Activated T-helper 1 cell treated with anti-CD3 and anti-CD28 coated beads, Interleukin-12 subunit alpha, Interleukin-12 subunit beta, Interleukin-2, Interleukin-4 antibody, amounts not matched to agents 30 ng/mL and 10 ng/mL and 1 ng/mL, durations not matched to agents 14 hours and 24 hours and 36 hours (primary cell): ENCODE measurements at regions of chr17 and their contacts with region 1.

Region 1: GRCh38 chr17:36534840-36535668 is at the starts of genes MYO19 and PIGW:
- DNase-seq: peak; percentile 86
- H3K4me3 Mint-ChIP-seq: peak within 1 kb of the TSS; percentile 98
- H3K27ac Mint-ChIP-seq: peak within 1 kb of the TSS; percentile 99
- H3K4me1 Mint-ChIP-seq: peaks cover 39% of the 10 kb centered on the region
- H3K27me3 Mint-ChIP-seq: no peaks in the 10 kb centered on the region
- total RNA-seq, gene MYO19: 159 and 165 TPM in 2 replicates
- total RNA-seq, gene PIGW: 29.4 and 30.8 TPM in 2 replicates

Region 2: DNA sequence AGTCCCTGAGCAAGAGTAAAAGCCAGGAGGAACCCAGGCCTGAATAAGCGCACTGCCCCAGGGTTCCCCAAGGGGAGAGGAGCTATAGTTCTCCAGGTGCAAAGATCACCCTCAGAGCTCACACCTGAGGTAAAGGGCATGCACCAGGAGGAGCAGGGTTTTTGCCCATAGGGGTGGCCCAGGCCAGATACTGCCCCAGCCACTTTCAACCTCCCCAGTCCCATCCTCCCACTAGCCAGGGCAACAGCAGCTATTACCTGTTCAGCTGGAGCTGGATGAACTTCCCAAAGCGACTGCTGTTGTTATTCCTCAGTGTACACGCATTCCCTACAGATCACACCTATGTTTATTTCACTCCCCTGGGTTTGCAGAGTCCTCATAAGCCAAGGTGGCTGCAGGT is 20.2 kb before region 1 on chr17:
- intact Hi-C with region 1: no loop called
- DNase-seq: no peak
- H3K4me3 Mint-ChIP-seq: no peak overlapping the region
- H3K27ac Mint-ChIP-seq: no peak overlapping the region
- H3K4me1 Mint-ChIP-seq: peaks cover 8% of the 10 kb centered on the region
- H3K27me3 Mint-ChIP-seq: no peaks in the 10 kb centered on the region

Region 3: DNA sequence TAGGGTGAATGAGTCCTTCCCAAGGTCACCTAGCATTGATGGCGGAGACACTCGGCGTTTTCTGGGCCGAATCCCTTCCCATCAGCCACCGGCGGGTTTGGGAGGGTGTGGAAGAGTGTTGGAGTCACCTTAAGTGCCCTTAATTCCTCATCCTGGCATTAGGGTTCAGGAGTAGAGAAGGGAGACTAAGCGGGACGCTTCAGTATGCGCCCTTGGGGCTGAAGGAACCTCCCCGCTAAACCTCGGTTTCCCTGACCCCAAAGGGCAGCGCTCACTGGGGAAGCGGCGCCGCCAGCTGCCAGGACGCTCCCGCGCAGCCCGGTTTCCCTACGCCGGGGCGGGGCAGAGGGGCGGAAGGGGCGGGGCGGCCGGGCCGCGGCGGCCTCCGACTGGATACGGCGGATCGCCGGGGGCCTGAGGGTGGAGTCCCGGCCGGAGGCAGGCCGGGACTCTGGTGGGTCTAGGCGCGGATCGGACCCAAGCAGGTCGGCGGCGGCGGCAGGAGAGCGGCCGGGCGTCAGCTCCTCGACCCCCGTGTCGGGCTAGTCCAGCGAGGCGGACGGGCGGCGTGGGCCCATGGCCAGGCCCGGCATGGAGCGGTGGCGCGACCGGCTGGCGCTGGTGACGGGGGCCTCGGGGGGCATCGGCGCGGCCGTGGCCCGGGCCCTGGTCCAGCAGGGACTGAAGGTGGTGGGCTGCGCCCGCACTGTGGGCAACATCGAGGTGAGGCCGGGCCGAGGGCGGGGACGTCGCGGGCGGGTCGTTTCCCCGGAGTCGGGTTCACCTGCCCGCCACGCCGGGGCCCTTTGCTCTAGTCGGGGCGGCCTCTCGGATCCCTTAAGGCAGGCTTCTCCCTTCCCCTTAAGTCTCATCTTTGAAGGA is 56.6 kb after region 1 on chr17 and contains the start of gene DHRS11:
- intact Hi-C with region 1: loop called (anchors 1 kb)
- DNase-seq: peak; percentile 74
- H3K4me3 Mint-ChIP-seq: peak within 1 kb of the TSS; percentile 85
- H3K27ac Mint-ChIP-seq: peak within 1 kb of the TSS; percentile 65
- H3K4me1 Mint-ChIP-seq: peaks cover 28% of the 10 kb centered on the region
- H3K27me3 Mint-ChIP-seq: no peaks in the 10 kb centered on the region
- total RNA-seq, gene DHRS11: 15.9 and 16.4 TPM in 2 replicates

Region 4: DNA sequence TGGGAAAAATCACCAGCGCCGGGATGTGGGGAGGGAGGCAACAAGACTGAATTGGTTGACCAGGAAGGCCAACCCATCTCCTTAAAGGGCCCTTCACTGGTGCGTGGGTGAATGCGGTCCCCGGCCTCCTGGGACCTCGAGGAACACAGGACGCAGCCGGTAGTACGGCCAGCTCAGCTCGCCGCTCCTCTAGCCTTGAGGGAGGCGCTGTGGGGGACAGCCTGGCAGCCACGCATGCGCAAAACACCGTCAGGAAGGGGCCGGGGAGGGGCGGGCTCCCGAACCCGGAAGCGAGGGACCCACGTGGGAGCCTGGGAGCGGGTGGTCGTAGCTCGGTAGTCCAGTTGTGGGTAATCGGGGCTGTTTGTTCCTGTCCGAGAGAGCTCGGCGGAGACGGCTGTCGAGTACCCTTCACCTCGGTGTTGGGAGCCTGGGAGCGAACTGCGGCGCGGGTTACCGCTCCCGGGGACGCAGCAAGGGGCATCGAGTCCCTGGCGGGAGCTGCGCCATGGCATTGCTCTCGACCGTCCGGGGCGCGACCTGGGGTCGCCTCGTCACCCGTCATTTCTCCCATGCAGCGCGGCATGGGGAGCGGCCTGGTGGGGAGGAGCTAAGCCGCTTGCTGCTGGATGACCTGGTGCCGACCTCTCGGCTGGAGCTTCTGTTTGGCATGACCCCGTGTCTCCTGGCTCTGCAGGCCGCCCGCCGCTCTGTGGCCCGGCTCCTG is 66.4 kb after region 1 on chr17 and contains the start of gene MRM1:
- intact Hi-C with region 1: loop called (anchors 1 kb)
- DNase-seq: peak; percentile 85
- H3K4me3 Mint-ChIP-seq: peak within 1 kb of the TSS; percentile 91
- H3K27ac Mint-ChIP-seq: peak within 1 kb of the TSS; percentile 70
- H3K4me1 Mint-ChIP-seq: peaks cover 38% of the 10 kb centered on the region
- H3K27me3 Mint-ChIP-seq: no peaks in the 10 kb centered on the region
- total RNA-seq, gene MRM1: 21.0 and 22.7 TPM in 2 replicates

Region 5: GRCh38 chr17:36665417-36665816 is 130.4 kb after region 1 on chr17:
- intact Hi-C with region 1: no loop called
- DNase-seq: no peak
- H3K4me3 Mint-ChIP-seq: no peak overlapping the region
- H3K27ac Mint-ChIP-seq: no peak overlapping the region
- H3K4me1 Mint-ChIP-seq: no peaks in the 10 kb centered on the region
- H3K27me3 Mint-ChIP-seq: peaks cover 21% of the 10 kb centered on the region

Region 6: DNA sequence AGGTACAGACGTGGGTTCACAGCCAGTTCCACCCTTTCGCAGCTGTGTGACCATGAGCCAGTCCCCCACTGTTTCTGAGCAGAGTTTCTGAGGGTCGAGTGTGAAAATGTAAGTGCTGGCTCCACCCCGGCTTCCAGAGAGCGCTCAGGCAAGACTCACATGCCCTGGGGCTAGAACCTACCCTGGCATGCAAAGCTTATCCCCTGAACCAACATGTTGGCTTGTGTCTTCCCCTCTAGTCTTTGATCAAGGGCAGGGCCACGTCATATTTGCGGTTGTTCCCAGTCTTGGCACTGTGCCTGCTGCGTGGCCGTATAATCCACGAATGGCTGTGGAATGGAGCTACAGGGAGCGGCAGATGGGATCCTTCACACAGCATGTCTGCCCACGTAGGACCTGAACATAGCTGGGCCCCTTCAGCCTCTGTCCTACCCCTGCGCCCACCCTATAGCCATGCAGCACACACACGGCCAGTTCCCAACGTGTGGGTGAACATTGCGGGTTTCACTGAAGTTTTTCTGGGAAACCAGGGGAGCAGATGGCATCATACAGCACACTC is 151.1 kb after region 1 on chr17:
- intact Hi-C with region 1: no loop called
- DNase-seq: no peak
- H3K4me3 Mint-ChIP-seq: no peak overlapping the region
- H3K27ac Mint-ChIP-seq: no peak overlapping the region
- H3K4me1 Mint-ChIP-seq: no peaks in the 10 kb centered on the region
- H3K27me3 Mint-ChIP-seq: peaks cover 6% of the 10 kb centered on the region

Region 7: GRCh38 chr17:36869856-36870719 is 335.0 kb after region 1 on chr17:
- intact Hi-C with region 1: no loop called
- DNase-seq: no peak
- H3K4me3 Mint-ChIP-seq: no peak overlapping the region
- H3K27ac Mint-ChIP-seq: no peak overlapping the region
- H3K4me1 Mint-ChIP-seq: no peaks in the 10 kb centered on the region
- H3K27me3 Mint-ChIP-seq: peaks cover 2% of the 10 kb centered on the region